Adrenal gland (tissue), 19 donors: ENCODE measurements at regions of chr12 and their contacts with region 1.

Region 1: GRCh38 chr12:121668750-121669520 is 519 bp downstream of the MORN3 start:
- DNase-seq: peak in 3 of 7 donors; percentile 37 to 55 (median 52)
- H3K4me3 ChIP-seq: no peak overlapping the region
- H3K27ac ChIP-seq: no peak overlapping the region
- H3K4me1 ChIP-seq: peaks cover 0 to 14% of the 10 kb centered on the region in 2 donors
- H3K27me3 ChIP-seq: no peaks in the 10 kb centered on the region
- CTCF ChIP-seq: peak; percentile 30 to 58 (median 41)
- POLR2A ChIP-seq: no peak

Region 2: GRCh38 chr12:121489874-121490273 is 179.1 kb before region 1 on chr12:
- intact Hi-C with region 1: loop called (anchors 5 to 10 kb)
- DNase-seq: no peak
- H3K4me3 ChIP-seq: no peak overlapping the region
- H3K27ac ChIP-seq: no peak overlapping the region
- H3K4me1 ChIP-seq: no peaks in the 10 kb centered on the region
- H3K27me3 ChIP-seq: no peaks in the 10 kb centered on the region
- CTCF ChIP-seq: no peak
- POLR2A ChIP-seq: no peak

Region 3: DNA sequence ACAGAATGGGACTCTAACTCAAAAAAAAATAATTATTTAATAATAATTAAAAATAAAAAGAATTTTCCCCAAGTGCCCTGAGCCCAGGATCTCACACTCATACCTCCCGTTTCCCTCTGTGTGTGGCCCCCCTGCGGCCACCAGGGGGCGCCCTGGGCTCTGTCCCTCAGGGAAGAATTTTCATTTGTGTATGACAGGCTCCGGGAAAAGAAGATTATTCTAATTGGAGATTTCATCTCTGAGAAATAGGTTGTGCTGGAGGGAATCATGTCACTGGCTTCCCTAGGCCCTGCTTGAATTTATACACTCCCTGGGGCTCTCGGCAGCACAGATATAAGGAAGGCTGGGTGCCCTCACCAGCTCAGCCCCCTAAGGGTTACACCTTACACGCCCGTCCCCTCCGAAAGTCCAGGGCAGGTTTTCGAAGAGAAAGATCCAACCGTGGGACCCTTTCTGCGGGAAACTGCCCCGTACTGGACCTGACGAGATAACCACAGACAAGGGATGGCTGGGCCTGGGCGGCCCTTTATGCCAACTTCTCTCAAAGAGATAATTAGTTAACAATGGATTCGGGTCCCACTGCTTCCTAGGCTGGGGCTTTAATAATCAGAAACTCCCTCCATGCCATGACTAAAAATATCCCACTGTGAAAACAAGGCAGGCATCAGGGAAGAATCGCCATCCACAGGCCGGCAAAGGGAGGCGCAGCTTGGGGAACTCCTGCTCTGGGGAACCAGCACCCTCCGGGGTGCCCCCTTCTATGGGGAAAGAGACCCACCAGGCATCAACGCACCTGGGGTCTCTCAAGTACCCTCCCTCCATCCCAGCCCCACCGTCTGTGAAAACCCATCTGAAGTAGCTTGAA is 168.8 kb before region 1 on chr12:
- intact Hi-C with region 1: loop called in 1 of 2 experiments (anchors 10 kb)
- DNase-seq: peak; percentile 69 to 90 (median 81)
- H3K4me3 ChIP-seq: no peak overlapping the region
- H3K27ac ChIP-seq: peak overlapping the region in 1 of 5 donors; percentile 71
- H3K4me1 ChIP-seq: peaks cover 0 to 6% of the 10 kb centered on the region in 2 donors
- H3K27me3 ChIP-seq: no peaks in the 10 kb centered on the region
- CTCF ChIP-seq: peak; percentile 77 to 100 (median 88)
- POLR2A ChIP-seq: no peak

Region 4: GRCh38 chr12:121513464-121514183 is 155.3 kb before region 1 on chr12:
- intact Hi-C with region 1: no loop called
- DNase-seq: peak in 6 of 7 donors; percentile 39 to 68 (median 49)
- H3K4me3 ChIP-seq: no peak overlapping the region
- H3K27ac ChIP-seq: no peak overlapping the region
- H3K4me1 ChIP-seq: no peaks in the 10 kb centered on the region
- H3K27me3 ChIP-seq: no peaks in the 10 kb centered on the region
- CTCF ChIP-seq: no peak
- POLR2A ChIP-seq: no peak

Region 5: GRCh38 chr12:121626087-121626852 is 42.7 kb before region 1 on chr12 and contains the start of gene ORAI1:
- intact Hi-C with region 1: loop called in 1 of 2 experiments (anchors 5 kb)
- DNase-seq: peak; percentile 96 to 98 (median 97)
- H3K4me3 ChIP-seq: peak within 1 kb of the TSS in 2 of 4 donors; percentile 48 to 75
- H3K27ac ChIP-seq: peak within 1 kb of the TSS; percentile 75 to 95 (median 81)
- H3K4me1 ChIP-seq: peaks cover 12 to 42% of the 10 kb centered on the region in 2 donors
- H3K27me3 ChIP-seq: no peaks in the 10 kb centered on the region
- CTCF ChIP-seq: peak in 2 of 6 experiments; percentile 27 to 38
- POLR2A ChIP-seq: peak; percentile 64 to 79
- total RNA-seq, gene ORAI1: 4.7 to 16.1 (median 10.2) TPM

Region 6: GRCh38 chr12:121823101-121823726 is 154.3 kb after region 1 on chr12:
- intact Hi-C with region 1: no loop called
- DNase-seq: peak in 2 of 7 donors; percentile 17 to 52
- H3K4me3 ChIP-seq: no peak overlapping the region
- H3K27ac ChIP-seq: no peak overlapping the region
- H3K4me1 ChIP-seq: no peaks in the 10 kb centered on the region
- H3K27me3 ChIP-seq: no peaks in the 10 kb centered on the region
- CTCF ChIP-seq: no peak
- POLR2A ChIP-seq: no peak